CD8-positive, alpha-beta T cell (primary cell): ENCODE measurements at regions of chr13 and their contacts with region 1.

Region 1: GRCh38 chr13:40206241-40207000 is 460.0 kb downstream of the FOXO1 start:
- DNase-seq: peak in 7 of 9 experiments; percentile 42 to 84 (median 52)
- ATAC-seq: peak; percentile 93
- H3K4me3 ChIP-seq: no peak overlapping the region
- H3K4me3 Mint-ChIP-seq: peak overlapping the region; percentile 73
- H3K27ac ChIP-seq: peak overlapping the region; percentile 65 to 76
- H3K27ac Mint-ChIP-seq: peak overlapping the region; percentile 100
- H3K4me1 ChIP-seq: peaks cover 58% of the 10 kb centered on the region
- H3K4me1 Mint-ChIP-seq: peaks cover 77% of the 10 kb centered on the region
- H3K27me3 ChIP-seq: no peaks in the 10 kb centered on the region
- H3K27me3 Mint-ChIP-seq: no peaks in the 10 kb centered on the region
- CTCF ChIP-seq: no peak

Region 2: DNA sequence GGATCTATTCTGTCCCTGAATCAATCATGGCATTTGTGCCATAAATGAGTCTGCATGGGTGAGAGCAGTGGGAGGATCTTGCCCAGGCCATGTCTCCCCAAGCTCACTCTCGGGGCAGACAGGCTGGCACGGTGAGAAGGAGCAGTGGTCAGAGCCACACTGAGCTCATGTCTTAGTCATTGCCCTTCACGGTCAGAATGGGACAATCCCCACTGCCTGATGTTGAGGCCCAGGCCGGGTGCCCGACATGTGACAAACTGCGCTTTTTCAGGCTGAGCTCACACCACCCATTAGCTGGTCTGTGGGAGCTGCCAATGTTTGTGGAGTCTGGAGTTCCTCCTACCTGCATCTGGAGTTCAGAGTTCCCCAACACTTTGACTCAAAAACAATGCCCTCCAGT is 69.0 kb before region 1 on chr13:
- CTCF ChIA-PET with region 1: no interaction called
- POLR2A ChIA-PET with region 1: no interaction called
- intact Hi-C with region 1: no loop called
- DNase-seq: no peak
- ATAC-seq: no peak
- H3K4me3 ChIP-seq: no peak overlapping the region
- H3K4me3 Mint-ChIP-seq: no peak overlapping the region
- H3K27ac ChIP-seq: no peak overlapping the region
- H3K27ac Mint-ChIP-seq: no peak overlapping the region
- H3K4me1 ChIP-seq: no peaks in the 10 kb centered on the region
- H3K4me1 Mint-ChIP-seq: peaks cover 5% of the 10 kb centered on the region
- H3K27me3 ChIP-seq: no peaks in the 10 kb centered on the region
- H3K27me3 Mint-ChIP-seq: no peaks in the 10 kb centered on the region
- CTCF ChIP-seq: no peak

Region 3: DNA sequence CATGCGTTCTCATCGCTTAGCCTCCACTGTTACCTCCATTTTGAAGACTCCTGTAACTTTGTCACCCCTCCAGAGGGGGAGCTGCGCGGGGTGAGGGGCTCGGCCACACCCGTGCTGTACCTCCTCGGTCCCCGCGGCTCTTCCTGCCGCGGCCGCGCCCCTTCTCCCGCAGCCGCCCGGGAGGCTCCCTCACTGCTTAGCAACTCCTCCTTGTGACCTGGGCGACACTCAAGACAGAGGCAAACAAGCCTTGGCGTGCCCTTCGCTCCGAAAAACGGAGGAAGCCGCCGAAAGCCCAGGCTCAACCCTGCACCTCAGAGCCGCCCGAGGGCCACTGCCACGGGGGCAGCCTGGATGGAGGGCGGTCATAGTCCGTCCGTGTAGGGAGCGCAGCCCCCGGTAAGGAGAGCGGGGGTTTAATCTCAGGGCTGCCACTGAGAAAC is 34.3 kb before region 1 on chr13:
- CTCF ChIA-PET with region 1: no interaction called
- POLR2A ChIA-PET with region 1: no interaction called
- intact Hi-C with region 1: no loop called
- DNase-seq: no peak
- ATAC-seq: no peak
- H3K4me3 ChIP-seq: no peak overlapping the region
- H3K4me3 Mint-ChIP-seq: peak overlapping the region; percentile 37
- H3K27ac ChIP-seq: no peak overlapping the region
- H3K27ac Mint-ChIP-seq: no peak overlapping the region
- H3K4me1 ChIP-seq: peaks cover 11% of the 10 kb centered on the region
- H3K4me1 Mint-ChIP-seq: peaks cover 34% of the 10 kb centered on the region
- H3K27me3 ChIP-seq: no peaks in the 10 kb centered on the region
- H3K27me3 Mint-ChIP-seq: peaks cover 2% of the 10 kb centered on the region
- CTCF ChIP-seq: no peak

Region 4: DNA sequence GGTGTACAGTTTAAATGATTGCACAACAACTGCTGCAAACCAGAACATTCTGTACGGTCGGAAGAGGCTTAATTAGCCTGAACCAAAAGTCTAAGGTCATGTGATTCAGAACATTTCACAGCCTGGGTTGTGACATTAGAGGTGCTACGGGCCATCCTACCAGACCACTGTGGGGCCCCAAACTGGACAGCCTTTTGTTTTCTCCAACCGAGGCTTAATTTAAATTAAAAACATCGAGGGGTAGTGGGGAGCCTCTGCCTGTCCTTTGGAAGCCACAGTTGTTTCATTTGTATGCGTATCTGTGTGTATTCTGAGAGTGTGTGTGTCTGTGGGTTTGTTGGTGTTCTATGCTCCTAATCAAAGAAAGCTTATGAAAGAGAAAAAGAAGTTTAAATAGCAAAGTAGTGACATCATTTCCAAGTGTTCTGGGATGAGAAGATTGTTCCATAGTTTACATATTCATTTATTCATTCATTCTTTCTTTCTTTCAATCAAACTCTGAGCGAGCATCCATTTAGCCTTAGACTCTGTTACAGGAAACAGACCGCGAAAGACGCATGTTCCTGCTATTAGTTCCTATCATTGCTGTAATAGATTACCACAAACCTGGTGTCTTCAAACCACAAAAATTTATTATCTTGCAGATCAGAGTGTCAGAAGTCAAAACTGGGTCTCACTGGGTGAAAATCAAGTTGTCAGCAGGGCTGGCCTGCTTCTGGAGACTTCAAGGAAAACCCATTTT is 15.2 kb after region 1 on chr13:
- CTCF ChIA-PET with region 1: interaction called, 4 read pairs
- POLR2A ChIA-PET with region 1: interaction called, 6 read pairs
- intact Hi-C with region 1: loop called in 1 of 2 experiments (anchors 1 kb)
- DNase-seq: peak in 6 of 9 experiments; percentile 8 to 87 (median 49)
- ATAC-seq: peak; percentile 79
- H3K4me3 ChIP-seq: peak overlapping the region in 1 of 2 experiments; percentile 14
- H3K4me3 Mint-ChIP-seq: peak overlapping the region; percentile 67
- H3K27ac ChIP-seq: peak overlapping the region; percentile 6 to 70
- H3K27ac Mint-ChIP-seq: peak overlapping the region; percentile 88
- H3K4me1 ChIP-seq: peaks cover 31% of the 10 kb centered on the region
- H3K4me1 Mint-ChIP-seq: peaks cover 59% of the 10 kb centered on the region
- H3K27me3 ChIP-seq: no peaks in the 10 kb centered on the region
- H3K27me3 Mint-ChIP-seq: no peaks in the 10 kb centered on the region
- CTCF ChIP-seq: no peak